AG04450 (cell line): ENCODE measurements at regions of chr13 and their contacts with region 1.

Region 1: DNA sequence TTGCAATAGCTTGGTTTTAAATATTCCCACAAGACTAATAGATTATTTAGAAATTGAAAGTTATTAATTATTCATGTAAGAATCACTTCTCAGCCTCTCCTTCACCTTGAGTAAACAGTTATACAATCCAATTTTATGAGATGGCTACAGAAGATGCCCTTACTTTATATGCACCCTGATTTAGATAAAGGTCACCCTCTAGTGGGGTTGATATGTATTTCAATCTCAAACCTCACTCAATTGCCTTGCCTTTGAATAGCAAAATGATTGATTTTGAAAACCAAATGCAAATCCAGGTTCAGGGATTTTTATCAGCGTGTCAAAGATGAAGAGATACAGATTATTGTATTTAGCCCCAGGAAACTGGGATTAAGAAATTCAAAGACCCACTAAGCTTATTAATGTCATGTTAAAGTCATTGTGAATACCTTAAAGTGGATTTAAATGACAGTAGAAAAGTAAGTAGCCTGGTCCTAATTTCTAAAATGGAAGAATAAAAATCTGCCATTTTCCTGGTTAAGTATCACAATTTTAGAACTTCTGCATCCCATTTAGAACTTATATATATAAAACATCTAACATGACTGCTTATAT is 305.1 kb downstream of the ITGBL1 start:
- DNase-seq: no peak
- H3K4me3 ChIP-seq: no peak overlapping the region
- H3K27ac ChIP-seq: no peak overlapping the region
- H3K27me3 ChIP-seq: no peaks in the 10 kb centered on the region
- CTCF ChIP-seq: peak; percentile 58

Region 2: DNA sequence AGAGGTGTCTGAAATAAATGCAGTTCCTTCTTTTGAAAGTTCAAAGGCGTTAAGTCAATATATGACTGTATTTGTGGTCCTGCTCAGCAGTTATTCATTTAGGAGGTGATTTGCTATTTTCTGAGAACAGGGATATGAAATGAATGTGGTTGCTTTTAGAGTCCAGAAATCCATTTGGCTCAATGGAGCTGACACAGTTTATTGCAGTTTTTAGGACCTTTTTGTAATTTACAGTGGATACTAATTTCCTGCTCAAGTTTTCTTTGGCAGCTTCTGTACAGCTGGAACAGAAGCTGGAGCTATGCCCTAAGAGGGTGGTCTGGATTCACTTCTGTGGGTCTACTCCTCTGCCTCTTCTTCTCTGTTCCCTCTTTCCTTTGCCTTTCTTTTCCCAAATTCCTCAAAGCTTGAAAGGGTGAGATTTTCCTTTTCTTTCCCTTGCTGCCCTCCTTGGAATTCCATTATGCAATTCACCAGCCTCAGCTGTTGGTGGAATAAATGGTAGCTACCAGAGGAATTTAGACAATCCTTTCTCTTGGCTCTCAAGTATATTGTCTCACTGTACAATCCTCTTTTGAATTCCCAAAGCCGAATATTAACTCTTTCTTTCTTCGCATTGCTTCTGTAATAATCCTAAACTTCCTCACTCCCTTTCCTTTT is 265.2 kb before region 1 on chr13:
- CTCF ChIA-PET with region 1: interaction called, 17 read pairs
- POLR2A ChIA-PET with region 1: no interaction called
- DNase-seq: no peak
- H3K4me3 ChIP-seq: no peak overlapping the region
- H3K27ac ChIP-seq: no peak overlapping the region
- H3K27me3 ChIP-seq: no peaks in the 10 kb centered on the region
- CTCF ChIP-seq: no peak

Region 3: DNA sequence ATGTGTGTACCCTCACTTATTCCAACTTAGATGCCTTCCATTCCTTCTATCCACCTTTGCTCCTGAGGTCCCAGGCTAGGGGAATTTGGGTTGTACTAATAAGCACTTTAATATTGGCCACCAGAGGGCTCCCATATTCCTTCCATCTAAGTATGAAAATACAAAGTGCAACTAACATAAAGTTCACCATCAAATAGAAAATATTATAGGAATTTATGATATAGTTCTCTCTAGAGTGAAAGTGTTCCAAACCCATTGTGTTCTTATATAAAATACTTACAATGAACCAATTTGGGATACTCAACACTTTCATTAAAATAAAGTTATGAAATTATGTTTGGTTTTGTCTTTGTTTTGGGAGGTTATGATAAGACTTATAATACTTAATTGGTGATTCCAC is 242.8 kb before region 1 on chr13:
- CTCF ChIA-PET with region 1: interaction called, 61 read pairs
- POLR2A ChIA-PET with region 1: no interaction called
- DNase-seq: peak; percentile 33
- H3K4me3 ChIP-seq: no peak overlapping the region
- H3K27ac ChIP-seq: no peak overlapping the region
- H3K27me3 ChIP-seq: no peaks in the 10 kb centered on the region
- CTCF ChIP-seq: peak; percentile 75

Region 4: DNA sequence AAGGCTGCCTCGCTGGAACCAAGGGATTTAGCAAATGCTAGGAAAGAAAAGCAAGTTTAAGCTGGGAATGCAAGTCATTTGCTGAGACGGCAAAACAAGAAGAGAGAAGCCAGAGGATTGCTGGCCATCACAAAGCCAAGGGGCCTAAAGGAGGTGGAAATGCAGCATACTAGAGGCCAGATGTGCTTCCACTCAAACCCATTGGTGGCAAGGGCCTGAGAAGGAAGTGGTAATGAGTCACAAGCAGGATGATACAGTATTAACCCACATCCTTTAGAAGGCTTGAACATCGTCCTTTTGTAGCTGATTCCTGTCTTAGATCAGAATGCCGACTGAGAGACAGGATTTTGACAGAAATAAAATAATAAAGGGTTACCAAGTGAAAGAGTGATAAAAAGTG is 236.9 kb before region 1 on chr13:
- CTCF ChIA-PET with region 1: interaction called, 61 read pairs
- POLR2A ChIA-PET with region 1: no interaction called
- DNase-seq: peak; percentile 15
- H3K4me3 ChIP-seq: no peak overlapping the region
- H3K27ac ChIP-seq: no peak overlapping the region
- H3K27me3 ChIP-seq: no peaks in the 10 kb centered on the region
- CTCF ChIP-seq: no peak

Region 5: GRCh38 chr13:101739382-101740178 is 18.0 kb before region 1 on chr13:
- CTCF ChIA-PET with region 1: interaction called, 10 read pairs
- POLR2A ChIA-PET with region 1: no interaction called
- DNase-seq: no peak
- H3K4me3 ChIP-seq: no peak overlapping the region
- H3K27ac ChIP-seq: no peak overlapping the region
- H3K27me3 ChIP-seq: no peaks in the 10 kb centered on the region
- CTCF ChIP-seq: no peak